Gastrocnemius medialis (tissue), 4 donors: ENCODE measurements at regions of chr11 and their contacts with region 1.

Region 1: DNA sequence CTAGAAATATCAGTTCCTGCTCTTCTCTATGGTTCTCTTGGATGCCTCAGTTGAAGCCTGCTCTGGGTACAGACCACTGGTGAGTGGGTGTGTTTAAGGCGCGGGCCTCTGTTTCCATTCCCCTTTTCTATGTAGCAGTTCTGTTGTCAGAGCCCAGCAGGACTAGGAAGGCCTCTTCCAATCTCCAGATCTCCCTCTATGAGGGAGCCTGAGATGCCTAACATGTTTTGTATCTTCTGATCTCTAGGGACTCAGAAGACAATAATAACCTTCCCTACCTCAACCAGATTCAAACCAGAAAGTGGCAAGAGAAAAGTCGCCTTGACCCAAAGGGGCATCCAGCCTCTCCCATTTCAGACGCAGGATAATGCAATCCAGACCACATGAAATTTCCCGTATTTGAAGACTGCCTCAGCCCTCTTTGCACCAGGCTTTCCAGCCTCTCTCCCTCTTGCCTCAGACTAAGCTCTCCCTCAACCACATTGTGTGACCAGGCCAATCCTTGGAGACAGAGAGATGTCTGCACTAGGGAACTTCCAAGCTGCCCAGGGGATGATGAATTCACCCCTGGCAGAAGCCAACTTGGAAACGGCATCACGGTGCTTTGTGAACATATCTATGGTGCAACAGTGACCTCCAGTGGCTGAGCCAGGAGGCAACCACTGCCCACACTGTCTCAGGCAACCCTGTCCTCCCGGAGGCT is 150.1 kb upstream of the UBASH3B start:
- DNase-seq: peak; percentile 65 to 78
- ATAC-seq: peak; percentile 97 to 99
- H3K4me3 ChIP-seq: no peak overlapping the region
- H3K27ac ChIP-seq: no peak overlapping the region
- H3K4me1 ChIP-seq: peaks cover 0 to 8% of the 10 kb centered on the region in 2 donors
- H3K27me3 ChIP-seq: no peaks in the 10 kb centered on the region
- CTCF ChIP-seq: peak; percentile 80 to 88 (median 85)
- POLR2A ChIP-seq: no peak

Region 2: GRCh38 chr11:121318848-121319834 is 1186.3 kb before region 1 on chr11:
- in situ Hi-C with region 1: loop called in 1 of 4 experiments (anchors 25 kb)
- intact Hi-C with region 1: no loop called
- DNase-seq: no peak
- ATAC-seq: peak in 1 of 2 donors; percentile 65
- H3K4me3 ChIP-seq: no peak overlapping the region
- H3K27ac ChIP-seq: no peak overlapping the region
- H3K4me1 ChIP-seq: no peaks in the 10 kb centered on the region
- H3K27me3 ChIP-seq: peaks cover 0 to 3% (median 0%) of the 10 kb centered on the region in 3 donors
- CTCF ChIP-seq: peak; percentile 15 to 56 (median 50)
- POLR2A ChIP-seq: no peak

Region 3: GRCh38 chr11:121655537-121656327 is 849.7 kb before region 1 on chr11:
- in situ Hi-C with region 1: loop called in 3 of 4 experiments (anchors 5 to 10 kb)
- intact Hi-C with region 1: loop called (anchors 1 kb)
- DNase-seq: peak; percentile 75 to 80
- ATAC-seq: peak; percentile 89 to 94
- H3K4me3 ChIP-seq: peak overlapping the region; percentile 46 to 71 (median 52)
- H3K27ac ChIP-seq: peak overlapping the region; percentile 86 to 87 (median 86)
- H3K4me1 ChIP-seq: peaks cover 7 to 11% of the 10 kb centered on the region in 2 donors
- H3K27me3 ChIP-seq: no peaks in the 10 kb centered on the region
- CTCF ChIP-seq: peak; percentile 84 to 91 (median 87)
- POLR2A ChIP-seq: no peak

Region 4: DNA sequence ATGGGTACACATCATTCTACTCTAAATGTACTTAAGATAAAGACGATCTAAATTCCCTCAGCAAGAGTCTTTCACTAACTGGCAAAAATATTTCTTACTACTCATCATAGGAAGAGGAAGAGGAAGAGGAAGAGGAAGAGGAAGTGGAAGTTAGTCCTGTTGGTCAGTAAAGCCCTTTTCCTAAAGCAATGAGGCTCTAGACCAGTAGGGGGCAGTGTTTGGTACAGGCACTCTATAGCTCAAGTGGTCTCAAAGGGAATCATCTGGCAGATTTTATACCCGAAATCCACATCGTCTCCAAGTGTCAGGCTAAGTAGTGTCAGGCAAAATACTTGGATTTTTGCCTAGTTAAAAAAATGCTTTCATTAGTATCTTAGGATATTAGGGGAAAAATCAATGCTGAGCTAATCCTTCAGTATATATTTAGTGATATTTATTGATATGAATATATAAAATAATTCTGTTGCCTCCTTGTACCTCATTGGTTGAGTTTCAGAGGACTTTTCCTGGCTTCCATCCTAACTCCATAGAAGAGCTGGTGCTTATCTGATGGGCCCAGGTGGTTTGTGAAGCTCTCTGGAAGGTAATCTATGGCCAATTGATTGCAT is 397.2 kb before region 1 on chr11:
- in situ Hi-C with region 1: loop called in 1 of 4 experiments (anchors 10 kb)
- intact Hi-C with region 1: no loop called
- DNase-seq: no peak
- ATAC-seq: peak in 1 of 2 donors; percentile 32
- H3K4me3 ChIP-seq: no peak overlapping the region
- H3K27ac ChIP-seq: peak overlapping the region; percentile 74 to 90 (median 80)
- H3K4me1 ChIP-seq: peaks cover 5 to 24% of the 10 kb centered on the region in 2 donors
- H3K27me3 ChIP-seq: no peaks in the 10 kb centered on the region
- CTCF ChIP-seq: peak; percentile 15 to 57 (median 37)
- POLR2A ChIP-seq: no peak

Region 5: DNA sequence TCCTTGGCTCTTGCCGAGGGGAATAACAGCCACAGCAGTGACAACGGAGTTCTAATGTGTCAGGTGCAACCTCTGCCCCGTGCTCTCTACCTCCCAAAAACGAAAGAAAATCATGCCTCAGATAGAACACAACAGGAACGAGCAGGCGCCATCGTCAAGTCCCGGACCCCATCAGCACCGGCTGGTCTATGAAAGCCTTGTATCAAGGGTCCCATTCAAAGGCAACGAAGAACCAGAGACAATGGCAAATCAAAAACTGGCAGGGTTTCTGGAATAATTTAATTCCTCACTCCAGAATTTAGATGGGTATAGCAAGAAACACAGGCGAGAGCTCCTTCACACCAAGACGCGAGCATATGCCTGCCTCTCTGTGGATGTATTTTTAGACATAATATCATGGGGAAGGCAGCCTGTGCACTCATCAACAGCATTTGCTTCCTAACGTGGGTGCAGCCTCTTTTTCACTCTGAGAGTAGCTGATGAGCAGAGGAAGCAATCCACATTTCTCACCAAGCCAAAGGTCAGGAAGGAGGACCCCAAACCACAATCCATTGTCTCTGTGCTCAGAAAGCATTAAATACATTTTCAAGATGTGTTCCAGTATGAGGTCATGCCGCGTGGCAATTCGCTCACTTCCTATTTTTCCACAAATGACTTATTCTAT is 196.1 kb before region 1 on chr11:
- in situ Hi-C with region 1: no loop called
- intact Hi-C with region 1: loop called (anchors 10 kb)
- DNase-seq: peak; percentile 20 to 28
- ATAC-seq: peak; percentile 93 to 95
- H3K4me3 ChIP-seq: peak overlapping the region; percentile 40 to 56 (median 46)
- H3K27ac ChIP-seq: peak overlapping the region; percentile 62 to 78 (median 74)
- H3K4me1 ChIP-seq: peaks cover 18 to 21% of the 10 kb centered on the region in 2 donors
- H3K27me3 ChIP-seq: no peaks in the 10 kb centered on the region
- CTCF ChIP-seq: no peak
- POLR2A ChIP-seq: no peak

Region 6: GRCh38 chr11:122769126-122769780 is 263.8 kb after region 1 on chr11:
- in situ Hi-C with region 1: no loop called
- intact Hi-C with region 1: no loop called
- DNase-seq: no peak
- ATAC-seq: no peak
- H3K4me3 ChIP-seq: no peak overlapping the region
- H3K27ac ChIP-seq: no peak overlapping the region
- H3K4me1 ChIP-seq: no peaks in the 10 kb centered on the region
- H3K27me3 ChIP-seq: peaks cover 0 to 2% (median 0%) of the 10 kb centered on the region in 3 donors
- CTCF ChIP-seq: no peak
- POLR2A ChIP-seq: no peak